Pancreas (tissue), 10 donors: ENCODE measurements at regions of chr6 and their contacts with region 1.

Region 1: GRCh38 chr6:111057074-111057752 is 30.1 kb upstream of the SLC16A10 start:
- DNase-seq: peak in 2 of 6 donors; percentile 31 to 38
- ATAC-seq: peak; percentile 85 to 99 (median 96)
- H3K4me3 ChIP-seq: no peak overlapping the region
- H3K27ac ChIP-seq: no peak overlapping the region
- H3K4me1 ChIP-seq: no peaks in the 10 kb centered on the region
- H3K27me3 ChIP-seq: no peaks in the 10 kb centered on the region
- CTCF ChIP-seq: peak; percentile 49 to 82 (median 58)

Region 2: GRCh38 chr6:110882271-110882613 is 175.0 kb before region 1 on chr6:
- intact Hi-C with region 1: no loop called
- DNase-seq: no peak
- ATAC-seq: no peak
- H3K4me3 ChIP-seq: no peak overlapping the region
- H3K27ac ChIP-seq: no peak overlapping the region
- H3K4me1 ChIP-seq: peaks cover 24 to 46% (median 40%) of the 10 kb centered on the region in 3 donors
- H3K27me3 ChIP-seq: no peaks in the 10 kb centered on the region
- CTCF ChIP-seq: no peak

Region 3: GRCh38 chr6:111154981-111155380 is 97.8 kb after region 1 on chr6:
- intact Hi-C with region 1: no loop called
- DNase-seq: no peak
- ATAC-seq: peak in 3 of 4 donors; percentile 16 to 50 (median 38)
- H3K4me3 ChIP-seq: no peak overlapping the region
- H3K27ac ChIP-seq: no peak overlapping the region
- H3K4me1 ChIP-seq: peaks cover 0 to 5% (median 0%) of the 10 kb centered on the region in 3 donors
- H3K27me3 ChIP-seq: no peaks in the 10 kb centered on the region
- CTCF ChIP-seq: no peak

Region 4: GRCh38 chr6:111207141-111207850 is 150.1 kb after region 1 on chr6:
- intact Hi-C with region 1: loop called in 2 of 3 experiments (anchors 5 to 10 kb)
- DNase-seq: no peak
- ATAC-seq: peak in 2 of 4 donors; percentile 11 to 16
- H3K4me3 ChIP-seq: no peak overlapping the region
- H3K27ac ChIP-seq: no peak overlapping the region
- H3K4me1 ChIP-seq: peaks cover 0 to 4% (median 0%) of the 10 kb centered on the region in 3 donors
- H3K27me3 ChIP-seq: no peaks in the 10 kb centered on the region
- CTCF ChIP-seq: no peak